Activated CD4-positive, alpha-beta T cell treated with anti-CD3 and anti-CD28 coated beads for 36 hours (primary cell): ENCODE measurements at regions of chr3 and their contacts with region 1.

Region 1: GRCh38 chr3:58491506-58492402 is at the start of gene KCTD6:
- DNase-seq: peak; percentile 91
- ATAC-seq: peak; percentile 90
- H3K4me3 Mint-ChIP-seq: peak within 1 kb of the TSS; percentile 84
- H3K27ac Mint-ChIP-seq: peak within 1 kb of the TSS; percentile 90
- H3K4me1 Mint-ChIP-seq: peaks cover 45% of the 10 kb centered on the region
- H3K27me3 Mint-ChIP-seq: peaks cover 6% of the 10 kb centered on the region
- total RNA-seq, gene KCTD6: 7.1 to 7.9 TPM

Region 2: DNA sequence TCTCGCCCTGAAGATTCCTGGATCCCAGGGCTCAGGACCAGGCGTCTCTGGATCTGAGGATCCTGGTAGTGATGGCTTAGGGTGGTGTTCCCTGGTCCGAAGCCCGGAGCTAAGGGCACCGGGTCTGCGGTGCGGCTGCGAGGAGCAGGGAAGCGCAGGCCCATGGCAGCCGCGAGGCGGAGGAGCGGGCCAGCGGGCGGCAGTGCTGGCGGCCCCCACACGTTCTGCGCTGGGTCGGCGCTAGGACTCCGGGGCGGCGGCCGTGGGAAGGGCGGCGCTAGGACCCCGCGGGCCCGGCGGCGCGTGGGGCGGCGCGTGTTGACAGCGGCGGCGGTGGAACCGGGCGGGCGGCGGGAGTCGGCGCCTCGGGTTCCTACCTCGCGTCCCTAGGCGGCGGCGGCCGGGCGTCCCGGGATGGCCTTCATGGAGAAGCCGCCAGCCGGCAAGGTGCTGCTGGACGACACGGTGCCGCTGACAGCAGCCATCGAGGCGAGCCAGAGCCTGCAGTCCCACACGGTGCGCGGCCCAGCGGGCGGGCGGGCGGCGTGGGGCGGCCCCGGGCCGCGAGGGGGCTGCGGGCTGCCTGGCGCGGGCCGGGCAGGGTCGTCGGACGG is 159.1 kb before region 1 on chr3 and contains the start of gene PXK:
- CTCF ChIA-PET with region 1: interaction called, 5 read pairs
- POLR2A ChIA-PET with region 1: no interaction called
- intact Hi-C with region 1: loop called (anchors 1 to 5 kb)
- DNase-seq: peak; percentile 89
- ATAC-seq: peak; percentile 84
- H3K4me3 Mint-ChIP-seq: peak within 1 kb of the TSS; percentile 100
- H3K27ac Mint-ChIP-seq: peak within 1 kb of the TSS; percentile 96
- H3K4me1 Mint-ChIP-seq: peaks cover 30% of the 10 kb centered on the region
- H3K27me3 Mint-ChIP-seq: no peaks in the 10 kb centered on the region
- total RNA-seq, gene PXK: 35.2 to 50.7 TPM

Region 3: GRCh38 chr3:58463181-58463941 is 28.4 kb before region 1 on chr3:
- CTCF ChIA-PET with region 1: interaction called, 13 read pairs
- POLR2A ChIA-PET with region 1: no interaction called
- intact Hi-C with region 1: loop called (anchors 1 kb)
- DNase-seq: peak; percentile 91
- ATAC-seq: peak; percentile 97
- H3K4me3 Mint-ChIP-seq: no peak overlapping the region
- H3K27ac Mint-ChIP-seq: peak overlapping the region; percentile 25
- H3K4me1 Mint-ChIP-seq: peaks cover 14% of the 10 kb centered on the region
- H3K27me3 Mint-ChIP-seq: no peaks in the 10 kb centered on the region

Region 4: DNA sequence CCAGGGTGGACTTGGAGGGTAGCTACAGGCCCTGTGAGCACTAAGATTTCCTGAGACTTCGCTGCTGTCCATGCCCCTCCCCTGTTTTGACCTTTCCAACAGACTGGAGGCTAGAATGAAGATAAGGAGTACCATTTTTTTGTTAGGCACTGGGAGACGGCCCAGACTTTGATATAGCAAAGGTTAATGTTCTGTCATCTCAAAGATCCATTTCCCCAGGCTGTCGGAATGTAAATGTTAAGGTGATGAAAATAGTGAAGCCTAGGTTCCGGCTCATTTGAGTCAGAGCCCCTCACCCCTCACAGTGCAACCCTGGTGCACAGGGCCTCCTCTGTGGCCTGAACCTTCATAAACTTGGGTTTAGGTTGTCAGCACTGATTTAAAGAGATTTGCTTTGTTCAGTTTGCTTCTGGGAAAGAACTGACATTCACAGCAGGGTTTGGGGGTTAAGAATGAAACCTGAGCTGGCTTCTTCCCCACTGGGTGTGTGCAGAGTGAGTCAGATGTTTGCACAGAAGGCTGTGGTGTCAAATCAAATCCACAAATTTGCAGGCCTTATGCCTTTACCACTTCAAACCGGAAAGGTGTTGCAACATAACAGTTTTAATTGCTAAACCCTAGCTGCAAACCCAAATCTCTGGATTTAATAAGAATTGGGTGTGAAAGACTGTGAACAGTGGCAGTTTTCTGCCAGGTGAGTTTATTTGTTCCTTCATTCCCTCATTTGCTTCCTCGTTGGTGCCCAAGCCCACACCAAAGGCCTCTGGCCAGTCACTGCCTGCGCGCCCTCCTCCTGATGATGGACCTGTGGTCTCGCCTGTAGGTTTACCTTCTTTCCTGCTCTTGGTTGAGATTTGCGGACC is 20.5 kb before region 1 on chr3:
- CTCF ChIA-PET with region 1: interaction called, 12 read pairs
- POLR2A ChIA-PET with region 1: no interaction called
- intact Hi-C with region 1: loop called (anchors 1 kb)
- DNase-seq: peak; percentile 82
- ATAC-seq: peak; percentile 96
- H3K4me3 Mint-ChIP-seq: no peak overlapping the region
- H3K27ac Mint-ChIP-seq: peak overlapping the region; percentile 73
- H3K4me1 Mint-ChIP-seq: peaks cover 32% of the 10 kb centered on the region
- H3K27me3 Mint-ChIP-seq: peaks cover 2% of the 10 kb centered on the region

Region 5: GRCh38 chr3:58532794-58533220 is 41.1 kb after region 1 on chr3:
- CTCF ChIA-PET with region 1: interaction called, 15 read pairs
- POLR2A ChIA-PET with region 1: interaction called, 4 read pairs
- intact Hi-C with region 1: loop called (anchors 1 kb)
- DNase-seq: peak; percentile 92
- ATAC-seq: peak; percentile 97
- H3K4me3 Mint-ChIP-seq: no peak overlapping the region
- H3K27ac Mint-ChIP-seq: peak overlapping the region; percentile 67
- H3K4me1 Mint-ChIP-seq: peaks cover 13% of the 10 kb centered on the region
- H3K27me3 Mint-ChIP-seq: no peaks in the 10 kb centered on the region